ENCODE measurements at regions of chr12 and their contacts with region 1.

Region 1: DNA sequence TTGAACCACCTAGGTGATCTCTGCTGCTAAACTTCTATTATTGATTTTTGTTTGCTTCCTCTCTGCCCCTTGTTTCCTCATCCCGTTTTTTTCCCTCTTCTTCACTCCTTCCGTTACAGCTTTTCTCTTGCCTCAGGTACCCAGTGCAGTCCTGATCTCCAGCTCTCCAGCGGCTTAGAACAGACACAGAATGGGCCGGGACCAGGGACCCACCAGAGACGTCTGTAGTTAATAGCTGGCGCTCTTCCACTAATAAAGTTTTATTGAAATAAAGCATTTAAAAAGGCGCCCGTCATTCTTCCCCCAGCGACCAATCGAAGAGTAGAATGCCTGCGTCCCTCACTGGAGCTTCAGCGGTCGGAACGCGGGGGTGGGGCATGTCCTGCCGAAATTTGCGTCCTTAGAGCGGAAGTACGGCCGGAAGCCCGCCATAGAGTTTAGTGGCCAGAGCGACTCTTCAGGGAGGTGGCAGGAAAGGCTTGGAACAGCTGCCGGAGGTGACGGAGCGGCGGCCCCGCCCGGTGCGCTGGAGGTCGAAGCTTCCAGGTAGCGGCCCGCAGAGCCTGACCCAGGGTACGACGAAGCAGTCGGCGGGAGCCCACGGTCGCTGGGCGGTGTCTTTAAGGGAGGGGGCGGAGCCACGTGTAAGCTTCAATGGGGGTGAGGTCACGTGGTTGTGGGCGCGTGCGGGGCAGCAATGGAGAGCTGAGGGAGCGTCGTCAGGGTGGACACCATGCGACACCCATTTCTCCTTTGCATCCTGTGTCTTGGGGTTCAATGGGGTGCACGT is at the start of gene COPS7A:
- DNase-seq: peak; percentile 100
- ATAC-seq: peak; percentile 96
- H3K4me3 Mint-ChIP-seq: peak within 1 kb of the TSS; percentile 84
- H3K27ac Mint-ChIP-seq: peak within 1 kb of the TSS; percentile 93
- H3K4me1 Mint-ChIP-seq: peaks cover 29% of the 10 kb centered on the region
- H3K27me3 Mint-ChIP-seq: no peaks in the 10 kb centered on the region
- total RNA-seq, gene COPS7A: 26.9 to 29.7 TPM

Region 2: DNA sequence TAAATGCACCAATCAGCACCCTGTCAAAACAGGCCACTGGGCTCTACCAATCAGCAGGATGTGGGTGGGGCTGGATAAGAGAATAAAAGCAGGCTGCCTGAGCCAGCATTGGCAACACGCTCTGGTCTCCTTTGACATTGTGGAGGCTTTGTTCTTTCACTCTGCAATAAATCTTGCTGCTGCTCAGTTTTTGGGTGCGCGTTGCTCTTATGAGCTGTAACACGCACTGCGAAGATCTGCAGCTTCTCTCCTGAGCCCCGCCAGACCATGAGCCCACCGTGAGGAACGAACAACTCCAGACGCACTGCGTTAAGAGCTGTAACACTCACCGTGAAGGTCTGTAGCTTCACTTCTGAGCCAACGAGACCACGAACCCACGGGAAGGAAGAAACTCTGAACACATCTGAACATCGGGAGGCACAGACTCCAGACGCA is 14.8 kb before region 1 on chr12:
- CTCF ChIA-PET with region 1: interaction called, 12 read pairs
- POLR2A ChIA-PET with region 1: interaction called, 13 read pairs
- DNase-seq: peak; percentile 50
- ATAC-seq: peak; percentile 57
- H3K4me3 Mint-ChIP-seq: peak overlapping the region; percentile 44
- H3K27ac Mint-ChIP-seq: peak overlapping the region; percentile 83
- H3K4me1 Mint-ChIP-seq: peaks cover 10% of the 10 kb centered on the region
- H3K27me3 Mint-ChIP-seq: peaks cover 13% of the 10 kb centered on the region

Region 3: DNA sequence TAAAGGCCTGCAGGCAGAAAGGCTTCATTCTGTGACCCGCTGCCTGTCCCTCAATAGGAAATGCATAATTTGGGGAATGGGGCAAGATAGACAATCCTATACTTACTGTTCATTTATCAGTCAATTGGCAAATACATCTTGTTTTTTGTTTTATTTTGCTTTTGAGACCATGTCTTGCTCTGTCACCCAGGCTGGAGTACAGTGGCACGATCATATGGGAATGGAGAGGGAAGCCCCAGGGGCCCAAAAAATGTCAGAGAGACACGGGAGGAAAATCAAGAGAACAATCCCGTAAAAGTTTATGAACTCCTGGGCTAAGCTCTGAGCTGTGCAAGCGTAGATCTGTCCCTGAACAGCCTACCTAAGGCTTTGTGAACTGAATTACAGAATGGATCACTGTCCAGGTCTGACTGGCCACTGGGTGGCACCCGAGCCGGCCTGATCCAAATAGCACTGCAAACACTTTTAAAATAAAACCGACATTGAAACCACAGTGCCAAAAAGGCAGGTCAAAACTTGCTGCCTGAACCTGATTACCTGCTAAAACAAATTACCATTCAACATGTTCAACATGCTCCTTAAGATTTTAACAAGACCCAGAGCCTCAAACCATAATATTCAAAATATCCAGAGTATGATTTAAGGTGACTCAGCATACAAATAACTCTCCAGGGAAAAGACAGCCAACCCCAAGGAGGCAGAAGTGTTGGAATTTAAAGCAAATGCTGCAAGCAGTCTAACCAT is 11.8 kb after region 1 on chr12:
- CTCF ChIA-PET with region 1: interaction called, 13 read pairs
- POLR2A ChIA-PET with region 1: interaction called, 12 read pairs
- DNase-seq: peak; percentile 68
- ATAC-seq: peak; percentile 76
- H3K4me3 Mint-ChIP-seq: no peak overlapping the region
- H3K27ac Mint-ChIP-seq: peak overlapping the region; percentile 44
- H3K4me1 Mint-ChIP-seq: peaks cover 10% of the 10 kb centered on the region
- H3K27me3 Mint-ChIP-seq: no peaks in the 10 kb centered on the region

Region 4: GRCh38 chr12:6764011-6764828 is 40.4 kb after region 1 on chr12:
- CTCF ChIA-PET with region 1: interaction called, 11 read pairs
- POLR2A ChIA-PET with region 1: interaction called, 3 read pairs
- DNase-seq: peak; percentile 75
- ATAC-seq: peak; percentile 67
- H3K4me3 Mint-ChIP-seq: peak overlapping the region; percentile 19
- H3K27ac Mint-ChIP-seq: peak overlapping the region; percentile 23
- H3K4me1 Mint-ChIP-seq: peaks cover 43% of the 10 kb centered on the region
- H3K27me3 Mint-ChIP-seq: peaks cover 43% of the 10 kb centered on the region

Region 5: GRCh38 chr12:6833189-6833890 is 109.5 kb after region 1 on chr12:
- CTCF ChIA-PET with region 1: interaction called, 16 read pairs
- POLR2A ChIA-PET with region 1: interaction called, 4 read pairs
- DNase-seq: no peak
- ATAC-seq: no peak
- H3K4me3 Mint-ChIP-seq: no peak overlapping the region
- H3K27ac Mint-ChIP-seq: no peak overlapping the region
- H3K4me1 Mint-ChIP-seq: peaks cover 12% of the 10 kb centered on the region
- H3K27me3 Mint-ChIP-seq: peaks cover 28% of the 10 kb centered on the region

Region 6: GRCh38 chr12:6851921-6852650 is 128.3 kb after region 1 on chr12 and contains the start of gene USP5:
- CTCF ChIA-PET with region 1: interaction called, 19 read pairs
- POLR2A ChIA-PET with region 1: interaction called, 25 read pairs
- DNase-seq: peak; percentile 99
- ATAC-seq: peak; percentile 83
- H3K4me3 Mint-ChIP-seq: peak within 1 kb of the TSS; percentile 90
- H3K27ac Mint-ChIP-seq: peak within 1 kb of the TSS; percentile 98
- H3K4me1 Mint-ChIP-seq: peaks cover 44% of the 10 kb centered on the region
- H3K27me3 Mint-ChIP-seq: no peaks in the 10 kb centered on the region
- total RNA-seq, gene USP5: 105 to 108 TPM

Measured in activated CD8-positive, alpha-beta T cell treated with anti-CD3 and anti-CD28 coated beads, Interleukin-2, amount 10 ng/mL, durations not matched to agents 7 days and 5 days (primary cell).